ENCODE measurements at regions of chr14 and their contacts with region 1.

Region 1: GRCh38 chr14:80954687-80955299 is 628 bp upstream of the TSHR start:
- DNase-seq: peak; percentile 53 to 80
- H3K4me3 ChIP-seq: peak overlapping the region; percentile 45 to 69 (median 55)
- H3K27ac ChIP-seq: no peak overlapping the region
- H3K4me1 ChIP-seq: peaks cover 0 to 2% of the 10 kb centered on the region in 2 donors
- H3K27me3 ChIP-seq: no peaks in the 10 kb centered on the region
- CTCF ChIP-seq: peak; percentile 42 to 86 (median 82)
- POLR2A ChIP-seq: no peak

Region 2: DNA sequence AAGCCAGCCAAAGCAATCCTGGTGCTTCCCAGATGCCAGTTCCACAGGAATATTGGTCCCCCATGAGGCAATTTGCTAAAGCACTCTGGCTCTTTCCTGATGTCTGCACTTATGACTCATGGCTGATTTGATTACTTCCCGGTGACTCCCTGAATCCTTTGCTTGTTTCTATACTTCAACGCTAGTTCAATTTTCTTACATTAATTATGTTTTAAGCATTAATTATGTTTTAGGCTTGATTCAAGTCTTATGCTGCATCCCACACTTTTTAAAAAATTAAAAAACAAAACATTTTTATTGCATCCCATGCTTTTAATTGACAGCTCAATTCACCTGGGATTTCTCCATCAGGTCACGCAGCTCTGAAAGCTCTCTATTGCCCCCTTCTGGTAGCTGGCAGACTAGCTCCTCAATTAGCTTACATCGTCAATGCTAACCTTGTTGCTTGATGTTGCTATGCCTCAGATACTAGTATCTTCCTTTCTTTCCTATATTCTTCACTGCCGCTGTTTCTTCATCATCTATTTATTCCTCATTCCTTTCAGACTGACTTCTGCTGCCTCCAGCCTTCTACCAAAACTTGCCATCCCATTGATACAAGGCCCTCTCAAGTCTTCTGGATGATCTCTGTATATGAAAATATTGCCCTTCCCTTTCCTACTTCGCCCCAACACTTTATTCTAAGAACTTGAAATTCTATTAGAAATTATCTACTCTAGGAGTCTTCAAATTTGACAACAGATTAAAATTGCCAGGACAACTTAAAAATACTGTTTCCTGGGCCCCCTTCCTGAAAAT is 32.6 kb after region 1 on chr14:
- intact Hi-C with region 1: loop called (anchors 5 kb)
- DNase-seq: peak; percentile 31 to 59
- H3K4me3 ChIP-seq: no peak overlapping the region
- H3K27ac ChIP-seq: no peak overlapping the region
- H3K4me1 ChIP-seq: no peaks in the 10 kb centered on the region
- H3K27me3 ChIP-seq: peaks cover 0 to 5% of the 10 kb centered on the region in 2 donors
- CTCF ChIP-seq: peak; percentile 74 to 84 (median 79)
- POLR2A ChIP-seq: no peak